Left ventricle myocardium superior (tissue), 1 donor: ENCODE measurements at regions of chr14 and their contacts with region 1.

Region 1: DNA sequence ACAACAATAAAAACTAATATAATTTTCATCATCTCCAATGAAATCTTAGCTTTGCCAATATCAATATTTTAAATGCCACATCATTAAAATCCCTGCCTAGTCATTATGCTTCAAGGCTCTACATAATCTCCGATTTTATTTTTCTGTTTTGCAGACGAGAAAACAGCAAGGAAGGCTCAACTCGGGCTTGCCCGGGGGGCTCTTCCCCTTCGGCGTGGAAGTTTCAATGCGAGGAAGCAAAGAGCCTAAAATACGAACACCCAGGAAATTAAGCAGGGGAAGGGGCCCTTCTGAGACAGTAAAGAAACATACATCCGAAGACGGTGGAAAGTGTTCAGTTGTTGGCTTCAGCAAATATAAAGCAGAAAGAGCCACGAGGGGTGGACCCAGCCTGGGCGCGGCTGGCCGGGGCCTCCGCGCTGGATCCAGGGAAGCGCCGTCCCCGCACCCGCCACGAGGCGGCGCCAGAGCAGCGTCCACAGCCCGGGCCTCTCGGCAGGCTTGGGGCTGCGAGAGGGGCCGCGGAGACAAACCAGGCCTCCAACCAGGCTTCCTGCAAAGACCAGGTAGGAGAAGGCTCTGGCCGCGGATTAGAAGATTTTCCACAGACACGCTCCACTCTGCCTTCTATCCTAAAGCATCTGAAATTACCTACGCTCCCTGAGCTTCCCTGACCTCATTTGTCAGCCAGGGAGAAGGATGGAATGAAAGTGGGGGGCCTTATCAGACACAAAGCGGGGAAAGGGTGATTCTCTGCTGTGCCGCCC is 77.2 kb downstream of the SERPINA3 start:
- DNase-seq: peak; percentile 80
- ATAC-seq: peak; percentile 98

Region 2: DNA sequence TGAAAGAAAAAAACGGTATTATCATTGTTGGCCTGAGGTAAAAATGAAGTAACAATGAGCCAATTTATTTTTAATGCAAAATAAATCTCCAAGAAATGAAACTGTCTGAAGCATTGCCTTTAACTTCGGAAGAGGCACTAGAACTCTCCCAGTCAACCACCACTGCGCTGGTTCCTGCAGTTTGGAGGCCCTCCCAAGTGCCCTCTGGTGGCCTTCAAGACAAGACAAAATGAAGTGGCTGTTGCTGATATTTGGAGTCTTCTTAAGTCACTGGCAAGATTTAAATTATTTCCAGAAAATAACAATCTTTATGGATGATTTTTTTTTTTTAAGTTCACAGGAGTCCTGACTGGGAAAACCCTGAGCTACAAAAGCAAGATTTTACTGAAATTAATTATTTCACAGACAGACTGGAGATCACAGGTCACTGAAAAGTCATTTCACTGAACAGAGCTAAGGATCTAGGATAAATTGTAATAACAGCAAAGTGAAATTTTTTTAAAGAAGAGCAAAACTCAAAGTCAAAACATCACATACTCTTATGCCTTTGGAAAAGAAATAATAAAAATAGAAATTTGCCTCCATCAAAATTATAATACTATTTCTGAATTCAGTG is 409.7 kb after region 1 on chr14:
- intact Hi-C with region 1: loop called (anchors 5 kb)
- DNase-seq: peak; percentile 72
- ATAC-seq: peak; percentile 74